ENCODE measurements at regions of chr12 and their contacts with region 1.

Region 1: DNA sequence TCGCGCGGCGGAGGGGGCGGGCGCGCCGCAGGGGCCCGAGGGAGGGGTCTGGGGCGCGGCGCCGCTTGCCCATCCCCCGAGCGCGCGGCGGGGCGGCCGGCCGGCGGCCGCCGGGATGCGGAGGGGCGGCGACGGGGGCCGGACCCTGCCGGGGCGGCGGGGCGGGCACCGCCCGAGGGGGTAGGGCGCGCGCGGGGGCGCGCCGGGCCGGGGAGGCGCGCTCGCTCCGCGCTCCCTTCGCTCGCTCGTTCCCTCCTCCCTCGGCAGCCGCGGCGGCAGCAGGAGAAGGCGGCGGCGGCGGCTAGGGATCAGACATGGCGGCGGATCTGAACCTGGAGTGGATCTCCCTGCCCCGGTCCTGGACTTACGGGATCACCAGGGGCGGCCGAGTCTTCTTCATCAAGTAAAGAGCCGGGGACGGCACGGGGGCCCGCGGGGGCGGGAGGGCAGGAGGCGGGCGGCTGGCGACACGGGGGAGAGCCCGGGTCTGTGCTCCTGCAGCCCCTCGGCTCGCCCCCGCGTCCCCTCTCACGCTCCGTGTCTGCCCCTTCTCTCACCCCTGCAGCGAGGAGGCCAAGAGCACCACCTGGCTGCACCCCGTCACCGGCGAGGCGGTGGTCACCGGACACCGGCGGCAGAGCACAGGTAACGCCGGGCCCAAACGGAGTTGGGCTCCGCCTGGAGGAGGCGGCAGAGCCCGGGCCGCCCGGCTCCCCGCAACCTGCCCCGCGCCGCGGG is at the start of gene PLEKHA5:
- DNase-seq: peak; percentile 64
- ATAC-seq: peak; percentile 85
- H3K4me3 ChIP-seq: peak within 1 kb of the TSS; percentile 77
- H3K27ac ChIP-seq: peak within 1 kb of the TSS; percentile 81
- H3K4me1 ChIP-seq: no peaks in the 10 kb centered on the region
- H3K27me3 ChIP-seq: no peaks in the 10 kb centered on the region
- CTCF ChIP-seq: 0 out of 2 replicates have a peak, but pooled peaks have one; percentile 6
- POLR2A ChIP-seq: no peak
- RAD21 ChIP-seq: no peak
- total RNA-seq, gene PLEKHA5: 12.2 and 16.1 TPM in 2 replicates

Region 2: GRCh38 chr12:18391151-18391550 is 738.5 kb before region 1 on chr12:
- CTCF ChIA-PET with region 1: no interaction called
- POLR2A ChIA-PET with region 1: no interaction called
- dilution Hi-C with region 1: no loop called
- in situ Hi-C with region 1: no loop called
- intact Hi-C with region 1: no loop called
- DNase-seq: no peak
- ATAC-seq: no peak
- H3K4me3 ChIP-seq: no peak overlapping the region
- H3K27ac ChIP-seq: no peak overlapping the region
- H3K4me1 ChIP-seq: no peaks in the 10 kb centered on the region
- H3K27me3 ChIP-seq: no peaks in the 10 kb centered on the region
- CTCF ChIP-seq: no peak
- POLR2A ChIP-seq: no peak
- RAD21 ChIP-seq: no peak

Region 3: DNA sequence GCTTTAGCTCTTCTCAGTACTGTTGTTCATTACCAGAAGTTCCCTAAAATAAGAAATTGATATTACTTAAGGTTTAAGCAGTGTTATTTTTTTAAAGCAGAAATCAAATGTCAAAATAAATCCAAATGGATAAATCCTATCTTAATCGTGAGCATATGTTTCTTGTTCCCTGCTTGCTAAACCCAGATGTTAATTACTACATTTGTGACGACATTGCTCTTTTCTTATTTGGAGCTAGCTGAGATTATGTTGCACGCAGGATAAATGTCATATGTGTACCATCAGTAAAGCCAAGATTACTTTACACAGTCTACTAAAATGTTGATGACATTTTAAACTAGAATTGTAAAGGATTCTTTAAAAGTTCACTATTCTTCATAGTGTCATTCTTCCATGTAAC is 549.4 kb before region 1 on chr12:
- CTCF ChIA-PET with region 1: no interaction called
- POLR2A ChIA-PET with region 1: no interaction called
- dilution Hi-C with region 1: no loop called
- in situ Hi-C with region 1: no loop called
- intact Hi-C with region 1: loop called (anchors 2 kb)
- DNase-seq: peak; percentile 38
- ATAC-seq: no peak
- H3K4me3 ChIP-seq: no peak overlapping the region
- H3K27ac ChIP-seq: no peak overlapping the region
- H3K4me1 ChIP-seq: peaks cover 13% of the 10 kb centered on the region
- H3K27me3 ChIP-seq: no peaks in the 10 kb centered on the region
- CTCF ChIP-seq: no peak
- POLR2A ChIP-seq: no peak
- RAD21 ChIP-seq: no peak

Region 4: DNA sequence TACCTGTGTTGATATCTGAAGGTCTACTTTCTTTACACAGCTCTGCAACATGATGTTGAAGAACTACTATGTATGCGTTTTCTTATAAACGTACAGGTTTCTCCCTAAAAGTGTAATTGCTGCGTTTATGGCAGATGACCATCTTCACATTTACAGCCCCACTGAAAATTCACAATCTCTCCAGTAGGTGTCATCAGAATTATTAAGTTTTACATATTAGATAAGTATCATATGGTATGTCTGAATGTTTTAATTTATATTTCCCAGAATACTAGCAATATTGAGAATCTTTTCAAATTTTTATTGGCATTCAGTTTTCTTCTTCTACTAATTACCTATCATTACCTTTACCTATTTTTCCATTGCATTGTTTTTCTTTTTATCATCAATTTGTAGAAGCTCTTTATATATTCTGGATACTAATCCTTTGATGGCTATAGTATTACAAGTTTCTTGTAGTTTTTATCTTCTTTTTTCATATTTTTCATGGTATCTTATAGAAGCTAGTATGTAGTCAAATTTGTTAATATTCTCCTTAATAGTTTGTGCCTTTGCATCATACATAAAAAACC is 268.3 kb before region 1 on chr12:
- CTCF ChIA-PET with region 1: no interaction called
- POLR2A ChIA-PET with region 1: no interaction called
- dilution Hi-C with region 1: no loop called
- in situ Hi-C with region 1: no loop called
- intact Hi-C with region 1: loop called (anchors 10 kb)
- DNase-seq: peak; percentile 38
- ATAC-seq: no peak
- H3K4me3 ChIP-seq: no peak overlapping the region
- H3K27ac ChIP-seq: no peak overlapping the region
- H3K4me1 ChIP-seq: no peaks in the 10 kb centered on the region
- H3K27me3 ChIP-seq: no peaks in the 10 kb centered on the region
- CTCF ChIP-seq: peak; percentile 43
- POLR2A ChIP-seq: no peak
- RAD21 ChIP-seq: peak; percentile 46

Region 5: GRCh38 chr12:19105463-19105862 is 24.2 kb before region 1 on chr12:
- CTCF ChIA-PET with region 1: no interaction called
- POLR2A ChIA-PET with region 1: no interaction called
- dilution Hi-C with region 1: no loop called
- in situ Hi-C with region 1: no loop called
- intact Hi-C with region 1: no loop called
- DNase-seq: no peak
- ATAC-seq: no peak
- H3K4me3 ChIP-seq: no peak overlapping the region
- H3K27ac ChIP-seq: no peak overlapping the region
- H3K4me1 ChIP-seq: no peaks in the 10 kb centered on the region
- H3K27me3 ChIP-seq: no peaks in the 10 kb centered on the region
- CTCF ChIP-seq: no peak
- POLR2A ChIP-seq: no peak
- RAD21 ChIP-seq: no peak

Region 6: GRCh38 chr12:19181666-19182426 is 52.2 kb after region 1 on chr12:
- CTCF ChIA-PET with region 1: interaction called, 5 read pairs
- POLR2A ChIA-PET with region 1: no interaction called
- dilution Hi-C with region 1: no loop called
- in situ Hi-C with region 1: no loop called
- intact Hi-C with region 1: loop called (anchors 5 kb)
- DNase-seq: no peak
- ATAC-seq: no peak
- H3K4me3 ChIP-seq: no peak overlapping the region
- H3K27ac ChIP-seq: no peak overlapping the region
- H3K4me1 ChIP-seq: peaks cover 5% of the 10 kb centered on the region
- H3K27me3 ChIP-seq: no peaks in the 10 kb centered on the region
- CTCF ChIP-seq: peak; percentile 37
- POLR2A ChIP-seq: no peak
- RAD21 ChIP-seq: peak; percentile 36

Region 7: DNA sequence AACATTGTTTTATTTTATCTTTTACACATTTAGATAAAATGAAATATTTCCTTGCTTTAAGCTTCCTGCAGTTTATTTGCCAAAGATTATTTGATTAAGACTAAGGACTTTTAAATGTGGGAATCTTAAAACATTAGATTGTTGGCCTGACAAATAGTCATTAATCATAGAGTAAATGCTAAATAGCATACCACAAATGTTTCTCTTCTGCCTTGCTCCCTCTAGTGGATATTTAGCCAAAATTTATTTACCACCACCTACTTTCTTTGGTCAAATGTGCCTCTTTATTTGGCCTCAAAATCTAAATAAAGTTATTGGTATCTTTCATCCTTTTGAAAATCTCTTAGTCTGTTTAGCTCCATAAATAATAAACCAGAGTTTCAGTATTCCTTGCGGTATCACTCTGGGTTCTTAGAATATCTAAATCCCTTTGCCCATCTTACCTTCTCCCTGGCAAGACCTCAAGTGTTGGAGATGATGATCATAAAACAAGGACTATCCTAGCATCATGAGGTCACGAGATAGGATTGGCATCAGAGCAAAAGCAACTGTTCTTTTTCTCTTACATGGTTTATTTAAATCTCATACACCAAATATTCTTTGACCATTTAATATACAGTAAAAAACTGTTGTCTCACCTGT is 159.1 kb after region 1 on chr12:
- CTCF ChIA-PET with region 1: no interaction called
- POLR2A ChIA-PET with region 1: no interaction called
- dilution Hi-C with region 1: no loop called
- in situ Hi-C with region 1: no loop called
- intact Hi-C with region 1: loop called (anchors 5 kb)
- DNase-seq: peak; percentile 44
- ATAC-seq: 0 out of 2 replicates have a peak, but pooled peaks have one; percentile 46
- H3K4me3 ChIP-seq: no peak overlapping the region
- H3K27ac ChIP-seq: no peak overlapping the region
- H3K4me1 ChIP-seq: no peaks in the 10 kb centered on the region
- H3K27me3 ChIP-seq: no peaks in the 10 kb centered on the region
- CTCF ChIP-seq: peak; percentile 65
- POLR2A ChIP-seq: no peak
- RAD21 ChIP-seq: peak; percentile 69